PC-3 (cell line): ENCODE measurements at regions of chr5 and their contacts with region 1.

Region 1: DNA sequence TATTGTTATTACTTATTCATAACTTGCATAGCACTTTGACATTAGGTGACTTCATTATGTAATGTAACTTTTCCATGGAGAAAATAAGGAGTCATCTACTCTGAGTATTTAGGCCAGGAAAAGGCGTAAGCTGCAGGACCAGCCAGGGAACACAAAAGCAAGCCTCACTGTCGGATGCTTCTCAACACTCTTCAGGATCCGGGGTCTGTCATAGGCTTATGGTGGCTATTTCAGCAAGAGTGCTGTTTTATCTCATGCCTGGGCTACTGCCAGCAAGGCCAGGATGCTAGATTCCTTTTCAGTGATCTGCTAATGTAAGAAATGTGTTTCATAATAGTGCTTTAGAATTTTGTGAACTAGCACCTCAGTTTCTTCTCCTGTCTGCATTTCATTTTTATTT is 162.4 kb downstream of the CHSY3 start:
- DNase-seq: no peak
- ATAC-seq: no peak
- H3K4me3 ChIP-seq: no peak overlapping the region
- H3K27ac ChIP-seq: no peak overlapping the region
- H3K4me1 ChIP-seq: peaks cover 4% of the 10 kb centered on the region; the same call in 1 of the 2 replicates
- H3K27me3 ChIP-seq: no peaks in the 10 kb centered on the region
- CTCF ChIP-seq: no peak

Region 2: DNA sequence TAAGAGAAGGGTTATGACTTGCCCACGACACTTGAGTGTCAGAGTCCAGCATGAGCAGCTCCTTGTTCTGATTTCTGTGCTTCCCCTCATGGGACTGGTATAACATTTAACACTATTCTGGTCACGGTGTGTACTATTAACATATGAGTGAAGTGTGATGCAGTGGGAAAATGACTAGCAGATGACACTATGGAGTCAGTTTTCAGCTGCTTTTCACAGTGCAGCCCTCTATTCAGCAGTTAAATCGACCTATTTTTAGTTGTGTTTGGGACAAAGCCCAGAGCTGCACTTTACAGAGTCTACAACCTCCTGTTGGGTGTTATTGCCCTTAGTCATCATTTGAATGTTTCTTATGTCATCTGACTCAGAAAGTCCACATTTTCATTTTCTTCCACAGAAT is 103.3 kb before region 1 on chr5:
- CTCF ChIA-PET with region 1: no interaction called
- POLR2A ChIA-PET with region 1: no interaction called
- intact Hi-C with region 1: loop called (anchors 10 kb)
- DNase-seq: peak; percentile 60
- ATAC-seq: peak; percentile 94
- H3K4me3 ChIP-seq: no peak overlapping the region
- H3K27ac ChIP-seq: peak overlapping the region; percentile 66
- H3K4me1 ChIP-seq: peaks cover 9% of the 10 kb centered on the region; the same call in 1 of the 2 replicates
- H3K27me3 ChIP-seq: no peaks in the 10 kb centered on the region
- CTCF ChIP-seq: no peak